Activated CD4-positive, alpha-beta memory T cell treated with anti-CD3 and anti-CD28 coated beads for 36 hours (primary cell): ENCODE measurements at regions of chr18 and their contacts with region 1.

Region 1: DNA sequence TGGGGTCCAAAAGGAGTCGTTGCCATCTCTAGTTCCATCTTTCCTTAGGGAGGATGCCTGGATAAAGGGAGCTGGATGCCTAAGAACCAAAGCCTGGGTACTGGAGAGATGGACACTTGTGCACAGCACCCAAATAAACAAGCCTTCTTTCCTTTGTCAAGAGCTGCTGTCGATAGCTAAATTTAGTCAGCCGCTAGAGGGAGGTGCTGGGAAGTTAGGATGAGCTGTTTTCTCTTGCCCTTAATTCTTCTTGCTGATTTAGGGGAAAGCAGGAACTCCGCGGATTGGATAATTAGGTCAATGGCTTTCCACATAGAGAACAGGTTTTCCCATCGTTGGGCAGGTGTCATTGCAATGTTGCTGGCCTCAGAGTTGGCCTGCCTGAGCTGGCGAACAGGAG is 30.9 kb upstream of the SERPINB12 start:
- DNase-seq: peak; percentile 11
- H3K4me3 Mint-ChIP-seq: no peak overlapping the region
- H3K27ac Mint-ChIP-seq: no peak overlapping the region
- H3K4me1 Mint-ChIP-seq: no peaks in the 10 kb centered on the region
- H3K27me3 Mint-ChIP-seq: peaks cover 19% of the 10 kb centered on the region

Region 2: GRCh38 chr18:63317982-63318881 is 193.1 kb before region 1 on chr18:
- CTCF ChIA-PET with region 1: no interaction called
- POLR2A ChIA-PET with region 1: no interaction called
- intact Hi-C with region 1: no loop called
- DNase-seq: peak; percentile 93
- H3K4me3 Mint-ChIP-seq: peak overlapping the region; percentile 94
- H3K27ac Mint-ChIP-seq: peak overlapping the region; percentile 93
- H3K4me1 Mint-ChIP-seq: peaks cover 46% of the 10 kb centered on the region
- H3K27me3 Mint-ChIP-seq: no peaks in the 10 kb centered on the region

Region 3: DNA sequence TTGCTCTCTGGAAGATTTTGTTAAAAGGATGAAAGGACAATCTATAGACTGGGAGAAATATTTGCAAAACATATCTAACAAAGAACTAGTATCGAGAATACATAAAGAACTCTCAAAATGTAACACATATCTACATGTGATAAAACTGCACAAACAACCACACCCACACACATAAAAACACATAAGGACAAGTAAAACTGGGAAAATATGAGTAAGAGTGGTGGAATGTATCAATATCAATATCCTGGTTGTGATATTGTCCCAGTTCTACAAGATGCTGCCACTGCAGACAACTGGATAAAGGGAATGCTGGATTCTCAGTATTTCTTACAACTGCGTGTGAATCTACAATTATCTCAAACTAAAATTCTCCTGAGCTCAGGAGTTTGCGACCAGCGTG is 98.3 kb before region 1 on chr18:
- CTCF ChIA-PET with region 1: no interaction called
- POLR2A ChIA-PET with region 1: no interaction called
- intact Hi-C with region 1: no loop called
- DNase-seq: no peak
- H3K4me3 Mint-ChIP-seq: no peak overlapping the region
- H3K27ac Mint-ChIP-seq: no peak overlapping the region
- H3K4me1 Mint-ChIP-seq: peaks cover 42% of the 10 kb centered on the region
- H3K27me3 Mint-ChIP-seq: no peaks in the 10 kb centered on the region

Region 4: GRCh38 chr18:63523660-63524059 is 12.4 kb after region 1 on chr18:
- CTCF ChIA-PET with region 1: interaction called, 44 read pairs
- POLR2A ChIA-PET with region 1: no interaction called
- intact Hi-C with region 1: no loop called
- DNase-seq: no peak
- H3K4me3 Mint-ChIP-seq: no peak overlapping the region
- H3K27ac Mint-ChIP-seq: no peak overlapping the region
- H3K4me1 Mint-ChIP-seq: no peaks in the 10 kb centered on the region
- H3K27me3 Mint-ChIP-seq: peaks cover 2% of the 10 kb centered on the region

Region 5: DNA sequence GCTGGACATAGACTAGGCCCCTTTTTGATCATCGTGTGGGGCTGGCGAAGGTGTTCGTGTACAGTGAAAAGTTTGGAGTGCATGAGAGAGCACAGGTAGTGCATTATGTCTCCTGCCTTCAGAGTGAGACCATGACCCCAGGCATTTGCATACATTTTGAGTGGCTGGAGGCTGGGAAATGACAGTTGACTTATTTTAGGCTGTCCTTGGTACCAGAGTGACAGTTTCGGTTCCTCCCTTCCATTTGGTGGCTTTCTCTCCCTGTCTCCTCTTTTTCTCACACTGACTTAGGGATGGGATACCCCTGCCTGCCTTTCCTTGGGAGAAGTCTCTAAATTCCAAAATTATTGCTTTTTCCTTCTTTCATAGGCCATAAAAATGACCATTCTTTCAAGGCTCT is 51.0 kb after region 1 on chr18:
- CTCF ChIA-PET with region 1: no interaction called
- POLR2A ChIA-PET with region 1: no interaction called
- intact Hi-C with region 1: no loop called
- DNase-seq: no peak
- H3K4me3 Mint-ChIP-seq: no peak overlapping the region
- H3K27ac Mint-ChIP-seq: no peak overlapping the region
- H3K4me1 Mint-ChIP-seq: no peaks in the 10 kb centered on the region
- H3K27me3 Mint-ChIP-seq: peaks cover 6% of the 10 kb centered on the region